ENCODE measurements at regions of chr15 and their contacts with region 1.

Region 1: DNA sequence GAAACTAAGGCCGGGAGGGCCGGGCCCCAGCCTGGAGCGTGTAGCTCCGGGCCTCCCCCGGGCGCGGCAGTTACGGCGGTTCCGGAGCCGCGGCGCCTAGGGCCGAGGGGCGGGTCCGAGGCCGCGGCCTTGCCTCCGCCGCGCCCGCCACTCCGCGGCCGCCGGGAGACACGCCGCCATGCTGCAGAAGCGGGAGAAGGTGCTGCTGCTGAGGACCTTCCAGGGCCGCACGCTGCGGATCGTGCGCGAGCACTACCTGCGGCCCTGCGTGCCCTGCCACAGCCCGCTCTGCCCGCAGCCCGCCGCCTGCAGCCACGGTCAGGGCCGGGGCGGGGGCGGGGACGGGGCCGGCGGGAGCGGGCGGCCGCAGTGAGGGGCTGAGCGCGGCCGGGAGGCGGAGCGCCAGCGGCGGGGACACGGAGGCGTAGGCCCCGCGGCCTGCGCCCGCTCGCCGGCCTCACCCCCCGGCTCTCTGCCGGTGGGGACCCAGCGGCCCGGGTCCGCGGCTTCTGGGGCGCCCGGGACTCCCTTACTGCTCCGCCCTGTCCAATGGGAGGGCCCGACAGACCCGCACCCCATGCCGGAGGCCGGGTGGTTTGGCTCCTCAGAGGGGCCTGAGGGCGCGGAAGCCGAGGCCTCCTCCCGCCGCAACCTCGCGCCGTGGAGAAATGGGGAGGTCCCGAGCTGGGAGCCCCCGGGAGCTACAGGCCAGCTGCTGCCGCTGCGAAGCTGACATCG is at the start of gene DIS3L:
- DNase-seq: peak in 9 of 10 donors; percentile 28 to 75 (median 41)
- H3K4me3 ChIP-seq: peak within 1 kb of the TSS; percentile 62 to 93 (median 80)
- H3K27ac ChIP-seq: peak within 1 kb of the TSS; percentile 70 to 97 (median 92)
- H3K27me3 ChIP-seq: no peaks in the 10 kb centered on the region
- CTCF ChIP-seq: peak in 10 of 56 donors; percentile 5 to 35 (median 10)
- total RNA-seq, gene DIS3L: 25.1 to 58.9 (median 43.1) TPM

Region 2: GRCh38 chr15:65595960-65596359 is 697.6 kb before region 1 on chr15:
- intact Hi-C with region 1: loop called in 1 of 2 experiments (anchors 10 kb)
- DNase-seq: peak in 3 of 10 donors; percentile 24 to 68 (median 55)
- H3K4me3 ChIP-seq: peak overlapping the region in 4 of 59 donors; percentile 6 to 34 (median 24)
- H3K27ac ChIP-seq: peak overlapping the region in 54 of 59 donors; percentile 15 to 94 (median 79)
- H3K27me3 ChIP-seq: no peaks in the 10 kb centered on the region
- CTCF ChIP-seq: peak in 55 of 56 donors; percentile 30 to 89 (median 64)

Region 3: DNA sequence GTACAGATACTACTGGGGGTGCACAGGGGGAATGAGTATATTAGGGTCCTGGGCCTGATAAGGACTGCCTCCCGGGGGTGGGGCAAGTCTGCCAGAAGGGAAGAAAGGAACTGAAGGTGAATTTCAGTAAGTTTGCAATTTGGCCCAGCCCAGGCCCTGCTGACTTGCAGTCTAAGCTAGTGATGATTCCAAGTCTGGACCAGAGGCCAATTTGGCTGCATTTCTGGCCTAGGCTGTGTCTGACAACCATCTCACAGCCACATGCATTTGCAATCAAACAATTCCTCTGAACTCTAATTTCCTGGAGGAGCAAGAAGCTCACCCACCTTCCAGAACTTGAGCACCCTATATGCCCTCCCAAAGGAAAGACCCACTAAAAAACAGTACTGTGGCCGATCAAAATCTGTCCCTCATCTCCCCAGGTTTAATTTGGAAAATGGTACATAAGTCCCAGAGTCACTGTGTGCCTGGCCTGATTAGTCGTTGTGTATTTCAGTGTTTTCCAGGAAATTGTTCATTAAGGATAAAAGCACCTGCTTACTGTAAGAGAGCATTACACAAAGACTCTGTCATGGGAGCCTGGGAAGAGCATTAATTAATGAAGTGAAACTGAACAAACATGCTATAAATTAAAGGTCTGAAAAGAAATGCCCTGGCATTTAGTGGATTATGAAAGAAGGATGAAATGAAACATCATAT is 154.5 kb before region 1 on chr15:
- intact Hi-C with region 1: loop called (anchors 5 to 10 kb)
- DNase-seq: peak in 1 of 10 donors; percentile 32
- H3K4me3 ChIP-seq: no peak overlapping the region
- H3K27ac ChIP-seq: no peak overlapping the region
- H3K27me3 ChIP-seq: no peaks in the 10 kb centered on the region
- CTCF ChIP-seq: no peak

Region 4: GRCh38 chr15:66278056-66278455 is 15.5 kb before region 1 on chr15:
- intact Hi-C with region 1: no loop called
- DNase-seq: no peak
- H3K4me3 ChIP-seq: no peak overlapping the region
- H3K27ac ChIP-seq: no peak overlapping the region
- H3K27me3 ChIP-seq: no peaks in the 10 kb centered on the region
- CTCF ChIP-seq: no peak

Region 5: GRCh38 chr15:66356345-66357236 is 63.0 kb after region 1 on chr15 and contains the start of gene TIPIN:
- intact Hi-C with region 1: loop called in 1 of 2 experiments (anchors 10 kb)
- DNase-seq: peak; percentile 77 to 95 (median 90)
- H3K4me3 ChIP-seq: peak within 1 kb of the TSS; percentile 46 to 80 (median 68)
- H3K27ac ChIP-seq: peak within 1 kb of the TSS in 52 of 59 donors; percentile 1 to 85 (median 62)
- H3K27me3 ChIP-seq: no peaks in the 10 kb centered on the region
- CTCF ChIP-seq: peak in 19 of 56 donors; percentile 0 to 42 (median 21)
- total RNA-seq, gene TIPIN: 5.6 to 21.1 (median 11.3) TPM

Region 6: GRCh38 chr15:66497502-66498455 is 204.2 kb after region 1 on chr15 and contains the start of gene SNAPC5:
- intact Hi-C with region 1: loop called (anchors 5 to 10 kb)
- DNase-seq: peak; percentile 94 to 97 (median 96)
- H3K4me3 ChIP-seq: peak within 1 kb of the TSS; percentile 47 to 99 (median 93)
- H3K27ac ChIP-seq: peak within 1 kb of the TSS in 58 of 59 donors; percentile 38 to 96 (median 84)
- H3K27me3 ChIP-seq: no peaks in the 10 kb centered on the region
- CTCF ChIP-seq: peak; percentile 98 to 100 (median 99)
- total RNA-seq, gene SNAPC5: 18.3 to 49.0 (median 32.9) TPM